Sigmoid colon (tissue), 7 donors: ENCODE measurements at regions of chr7 and their contacts with region 1.

Region 1: DNA sequence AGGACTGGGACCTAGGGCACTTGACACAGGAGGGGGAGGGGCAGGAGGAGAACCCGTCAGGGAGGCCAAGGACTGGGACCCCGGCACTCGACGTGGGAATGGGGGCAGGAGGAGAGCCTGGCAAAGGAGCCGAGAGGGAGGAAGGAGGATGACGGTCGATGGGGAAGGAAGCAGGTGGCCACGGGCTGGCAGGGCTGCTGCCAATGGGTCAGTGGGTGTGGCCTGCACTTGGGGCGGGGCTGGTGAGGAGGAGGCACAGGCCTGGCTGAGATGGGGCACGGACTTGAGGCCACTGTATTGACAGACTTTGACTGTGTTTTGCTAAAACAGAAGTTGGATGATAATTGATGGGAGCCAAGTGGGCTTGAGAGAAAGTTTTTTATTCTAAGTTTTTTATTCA is 68.9 kb downstream of the RBM33 start:
- DNase-seq: no peak
- H3K4me3 ChIP-seq: no peak overlapping the region
- H3K27ac ChIP-seq: no peak overlapping the region
- H3K4me1 ChIP-seq: no peaks in the 10 kb centered on the region
- H3K27me3 ChIP-seq: no peaks in the 10 kb centered on the region
- CTCF ChIP-seq: no peak
- EP300 ChIP-seq: no peak
- POLR2A ChIP-seq: no peak

Region 2: GRCh38 chr7:155653803-155654202 is 59.6 kb before region 1 on chr7:
- intact Hi-C with region 1: loop called (anchors 10 kb)
- DNase-seq: no peak
- H3K4me3 ChIP-seq: no peak overlapping the region
- H3K27ac ChIP-seq: no peak overlapping the region
- H3K4me1 ChIP-seq: peaks cover 0 to 39% (median 26%) of the 10 kb centered on the region in 4 donors
- H3K27me3 ChIP-seq: no peaks in the 10 kb centered on the region
- CTCF ChIP-seq: no peak
- EP300 ChIP-seq: no peak
- POLR2A ChIP-seq: no peak